ENCODE measurements at regions of chr2 and their contacts with region 1.

Region 1: DNA sequence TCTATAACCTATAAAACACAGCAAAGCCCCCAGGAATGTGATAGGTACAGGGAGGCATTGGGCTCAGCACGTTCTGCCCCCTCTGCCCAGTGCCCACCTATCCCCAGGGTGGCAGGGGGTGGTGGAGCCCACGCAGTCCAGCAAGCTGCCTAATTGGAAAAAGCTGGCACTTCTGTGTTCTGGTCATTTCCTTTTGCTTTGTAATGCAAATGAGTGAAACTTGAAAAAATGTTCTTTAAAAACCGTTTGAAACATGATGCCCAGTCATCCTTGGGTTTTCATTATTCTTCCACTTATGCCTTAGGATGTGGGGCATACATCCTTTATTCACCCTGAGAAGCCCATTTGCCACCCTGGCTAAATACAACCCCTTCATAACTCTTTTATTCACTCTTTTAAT is 89.9 kb upstream of the LTBP1 start:
- DNase-seq: no peak
- H3K4me3 ChIP-seq: no peak overlapping the region
- H3K27ac ChIP-seq: no peak overlapping the region
- H3K4me1 ChIP-seq: 0 out of 7 replicates have a peak, but pooled peaks cover 0 to 3% (median 0%) of the 10 kb centered on the region in 4 experiments
- H3K27me3 ChIP-seq: no peaks in the 10 kb centered on the region
- CTCF ChIP-seq: no peak
- EP300 ChIP-seq: no peak
- POLR2A ChIP-seq: no peak
- RAD21 ChIP-seq: no peak

Region 2: DNA sequence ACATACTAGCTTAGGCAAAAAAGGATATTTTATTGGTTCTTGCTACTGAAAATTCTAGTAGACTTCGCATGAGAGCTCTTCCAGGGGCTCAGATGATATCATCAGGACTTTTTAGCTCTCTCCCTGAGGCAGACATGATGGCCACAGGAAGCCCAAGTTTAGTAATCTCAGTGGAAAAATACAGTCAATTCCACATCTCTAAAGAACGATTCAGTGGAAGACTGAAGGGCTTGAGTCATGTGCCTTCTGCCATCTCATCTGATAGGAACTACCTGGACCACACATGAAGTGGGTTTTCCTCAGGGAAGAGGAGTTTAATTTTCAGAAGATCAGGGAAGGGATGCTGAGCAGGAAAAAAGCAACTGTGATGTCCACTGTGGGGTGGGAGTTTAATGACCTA is 111.7 kb before region 1 on chr2:
- CTCF ChIA-PET with region 1: no interaction called
- POLR2A ChIA-PET with region 1: no interaction called
- DNase-seq: no peak
- H3K4me3 ChIP-seq: no peak overlapping the region
- H3K27ac ChIP-seq: no peak overlapping the region
- H3K4me1 ChIP-seq: no peaks in the 10 kb centered on the region
- H3K27me3 ChIP-seq: no peaks in the 10 kb centered on the region
- CTCF ChIP-seq: no peak
- EP300 ChIP-seq: no peak
- POLR2A ChIP-seq: no peak
- RAD21 ChIP-seq: no peak

Region 3: GRCh38 chr2:32825291-32825712 is 31.6 kb before region 1 on chr2:
- CTCF ChIA-PET with region 1: interaction called, 10 read pairs
- POLR2A ChIA-PET with region 1: no interaction called
- DNase-seq: no peak
- H3K4me3 ChIP-seq: no peak overlapping the region
- H3K27ac ChIP-seq: no peak overlapping the region
- H3K4me1 ChIP-seq: no peaks in the 10 kb centered on the region; a peak in 1 of 7 replicates
- H3K27me3 ChIP-seq: no peaks in the 10 kb centered on the region
- CTCF ChIP-seq: no peak
- EP300 ChIP-seq: no peak
- POLR2A ChIP-seq: no peak
- RAD21 ChIP-seq: no peak

Region 4: GRCh38 chr2:32874931-32875330 is 18.0 kb after region 1 on chr2:
- CTCF ChIA-PET with region 1: no interaction called
- POLR2A ChIA-PET with region 1: no interaction called
- DNase-seq: no peak
- H3K4me3 ChIP-seq: no peak overlapping the region
- H3K27ac ChIP-seq: no peak overlapping the region
- H3K4me1 ChIP-seq: no peaks in the 10 kb centered on the region
- H3K27me3 ChIP-seq: no peaks in the 10 kb centered on the region
- CTCF ChIP-seq: no peak
- EP300 ChIP-seq: no peak
- POLR2A ChIP-seq: no peak
- RAD21 ChIP-seq: no peak

Measured in H1 (cell line).